Activated CD4-positive, alpha-beta memory T cell treated with anti-CD3 and anti-CD28 coated beads for 36 hours (primary cell): ENCODE measurements at regions of chr4 and their contacts with region 1.

Region 1: GRCh38 chr4:15756361-15756861 is 21.7 kb upstream of the CD38 start:
- DNase-seq: peak; percentile 88
- H3K4me3 Mint-ChIP-seq: peak overlapping the region; percentile 50
- H3K27ac Mint-ChIP-seq: peak overlapping the region; percentile 73
- H3K4me1 Mint-ChIP-seq: peaks cover 43% of the 10 kb centered on the region
- H3K27me3 Mint-ChIP-seq: no peaks in the 10 kb centered on the region

Region 2: DNA sequence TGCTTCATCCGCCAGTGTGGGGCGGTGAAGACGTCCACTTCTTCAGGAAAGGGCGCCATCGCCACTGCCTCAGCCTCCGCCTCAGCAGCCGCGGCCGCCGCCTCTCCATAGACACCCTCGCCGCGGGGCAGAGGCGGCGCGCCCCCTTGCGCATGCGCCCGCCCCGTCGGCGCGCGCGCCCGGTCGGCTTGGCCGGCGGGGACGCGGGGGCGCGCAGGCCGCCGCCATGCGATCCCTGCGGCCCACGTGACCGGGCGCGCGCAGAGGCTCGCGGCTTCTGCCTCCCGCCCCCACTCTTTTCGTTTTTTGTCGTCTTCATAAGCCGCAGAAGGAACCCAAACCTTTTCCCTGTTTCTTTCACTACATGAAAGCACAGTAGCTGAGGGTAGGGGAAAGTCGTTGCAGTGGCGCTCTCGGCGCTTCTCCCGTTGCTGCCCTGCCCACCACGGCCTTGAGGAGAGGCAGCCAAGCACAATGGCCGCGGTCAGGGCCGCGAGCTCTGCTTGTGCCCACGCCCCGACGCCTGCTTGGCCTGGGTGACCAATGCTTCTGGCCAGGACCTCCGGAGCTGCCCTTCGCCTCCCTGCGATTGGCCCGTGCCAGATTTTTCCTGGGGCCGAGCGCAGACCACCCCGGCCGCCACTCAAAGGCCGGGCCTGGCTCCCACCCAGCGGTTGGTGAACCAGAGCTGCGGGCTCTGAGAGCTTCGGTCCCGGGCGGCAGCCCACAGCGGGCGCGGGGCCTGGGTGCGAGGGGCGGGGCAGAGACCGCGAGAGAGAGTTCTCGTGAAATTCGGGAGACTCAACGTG is 101.0 kb before region 1 on chr4 and contains the start of gene FBXL5:
- CTCF ChIA-PET with region 1: interaction called, 3 read pairs
- POLR2A ChIA-PET with region 1: interaction called, 4 read pairs
- intact Hi-C with region 1: loop called (anchors 1 kb)
- DNase-seq: peak; percentile 89
- H3K4me3 Mint-ChIP-seq: peak within 1 kb of the TSS; percentile 93
- H3K27ac Mint-ChIP-seq: peak within 1 kb of the TSS; percentile 94
- H3K4me1 Mint-ChIP-seq: peaks cover 61% of the 10 kb centered on the region
- H3K27me3 Mint-ChIP-seq: no peaks in the 10 kb centered on the region
- total RNA-seq, gene FBXL5: 26.5 to 30.4 TPM

Region 3: GRCh38 chr4:15729910-15730533 is 26.4 kb before region 1 on chr4:
- CTCF ChIA-PET with region 1: interaction called, 23 read pairs
- POLR2A ChIA-PET with region 1: no interaction called
- intact Hi-C with region 1: loop called (anchors 1 kb)
- DNase-seq: peak; percentile 15
- H3K4me3 Mint-ChIP-seq: no peak overlapping the region
- H3K27ac Mint-ChIP-seq: no peak overlapping the region
- H3K4me1 Mint-ChIP-seq: no peaks in the 10 kb centered on the region
- H3K27me3 Mint-ChIP-seq: peaks cover 2% of the 10 kb centered on the region

Region 4: DNA sequence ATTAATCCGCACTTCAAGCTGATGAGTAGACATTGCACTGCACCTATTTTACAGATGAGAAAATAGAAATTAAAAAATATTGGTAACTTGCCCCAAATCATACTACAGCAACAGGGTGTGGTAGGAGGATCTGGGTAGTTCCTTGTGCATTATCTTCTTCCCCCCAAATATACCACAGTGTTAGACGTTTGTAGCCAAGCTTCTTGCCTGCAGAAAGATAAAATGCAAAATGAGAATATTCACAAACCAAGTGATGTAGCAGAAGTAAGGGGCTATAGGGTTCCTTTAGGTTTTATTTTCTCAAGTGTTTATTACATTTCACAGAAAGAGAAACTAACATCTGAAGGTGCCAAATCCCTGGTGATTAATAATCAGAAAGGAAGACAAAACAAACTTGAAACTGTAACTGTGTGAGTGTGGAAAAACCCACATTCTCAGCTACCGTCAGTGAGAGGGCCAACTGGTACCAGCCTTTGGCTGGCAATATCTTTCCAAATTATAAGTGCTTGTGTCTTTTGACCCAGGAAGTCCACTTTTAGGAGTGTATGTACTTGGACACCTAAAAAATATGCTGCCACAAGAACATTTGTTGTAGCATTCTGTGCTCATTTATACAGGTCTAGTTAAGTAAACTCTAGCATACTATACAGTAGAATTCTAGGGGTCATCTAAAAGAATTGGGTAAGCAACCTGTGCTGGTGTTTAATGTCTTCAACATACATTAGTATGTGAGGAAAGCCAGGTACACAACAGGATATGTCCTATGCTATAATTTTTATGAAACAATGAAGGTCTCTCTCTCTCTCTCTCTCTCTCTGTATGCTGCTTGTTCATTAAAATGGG is 15.0 kb after region 1 on chr4:
- CTCF ChIA-PET with region 1: interaction called, 30 read pairs
- POLR2A ChIA-PET with region 1: interaction called, 13 read pairs
- intact Hi-C with region 1: loop called (anchors 1 kb)
- DNase-seq: peak; percentile 50
- H3K4me3 Mint-ChIP-seq: no peak overlapping the region
- H3K27ac Mint-ChIP-seq: peak overlapping the region; percentile 29
- H3K4me1 Mint-ChIP-seq: peaks cover 48% of the 10 kb centered on the region
- H3K27me3 Mint-ChIP-seq: peaks cover 27% of the 10 kb centered on the region

Region 5: DNA sequence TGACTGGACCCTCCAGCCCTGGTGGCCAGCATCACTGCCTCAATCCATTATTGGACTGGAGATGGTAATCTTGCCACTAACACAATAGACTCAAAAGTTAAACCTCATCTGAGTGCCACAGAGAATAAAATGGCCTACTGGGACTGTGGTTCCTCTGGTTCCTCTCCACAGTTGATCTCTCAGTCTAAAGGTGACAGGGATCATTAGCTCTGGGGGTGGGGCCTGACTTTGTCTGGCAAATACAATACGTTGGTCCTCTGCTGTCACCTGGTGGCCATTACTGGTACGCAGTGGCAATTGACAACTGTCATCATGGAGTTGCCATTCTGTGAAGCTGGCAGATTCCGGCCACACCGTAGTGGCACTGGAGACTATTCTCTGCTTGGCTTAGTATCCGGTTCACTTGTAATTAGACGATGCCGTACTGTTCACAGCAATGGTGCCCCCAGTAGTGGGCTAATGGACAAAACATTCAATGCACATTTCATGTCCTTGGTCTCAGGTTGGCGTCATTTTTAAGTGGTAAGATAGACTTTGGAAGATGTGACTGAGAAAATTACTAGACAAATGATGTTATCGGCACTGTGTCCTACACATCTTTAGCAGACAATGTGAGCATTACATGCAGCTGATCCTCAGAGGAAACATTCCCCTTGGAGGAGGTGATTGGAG is 199.9 kb after region 1 on chr4:
- CTCF ChIA-PET with region 1: interaction called, 10 read pairs
- POLR2A ChIA-PET with region 1: no interaction called
- intact Hi-C with region 1: no loop called
- DNase-seq: peak; percentile 87
- H3K4me3 Mint-ChIP-seq: no peak overlapping the region
- H3K27ac Mint-ChIP-seq: no peak overlapping the region
- H3K4me1 Mint-ChIP-seq: no peaks in the 10 kb centered on the region
- H3K27me3 Mint-ChIP-seq: peaks cover 4% of the 10 kb centered on the region

Region 6: DNA sequence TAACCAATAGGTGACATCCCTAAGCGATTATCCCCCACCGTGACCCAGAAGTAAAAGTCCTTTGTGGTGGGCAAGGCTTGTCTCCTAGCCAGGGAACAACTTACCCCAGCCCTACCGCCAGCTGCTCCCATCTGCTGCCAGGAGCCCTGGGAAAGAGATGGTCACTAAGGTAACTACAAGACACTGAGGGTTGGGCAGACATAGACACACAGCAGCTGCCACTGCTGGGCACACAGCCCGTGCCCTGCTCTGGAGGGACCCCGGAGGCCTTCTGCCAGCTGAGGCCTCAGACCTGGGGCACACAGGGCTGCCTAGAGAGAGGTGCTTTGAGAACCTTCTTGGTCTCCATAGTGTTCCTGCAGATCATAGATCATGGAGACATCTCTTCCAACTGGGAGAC is 380.4 kb after region 1 on chr4:
- CTCF ChIA-PET with region 1: no interaction called
- POLR2A ChIA-PET with region 1: no interaction called
- intact Hi-C with region 1: no loop called
- DNase-seq: no peak
- H3K4me3 Mint-ChIP-seq: no peak overlapping the region
- H3K27ac Mint-ChIP-seq: no peak overlapping the region
- H3K4me1 Mint-ChIP-seq: no peaks in the 10 kb centered on the region
- H3K27me3 Mint-ChIP-seq: peaks cover 20% of the 10 kb centered on the region